GM12878 (cell line): ENCODE measurements at regions of chr20 and their contacts with region 1.

Region 1: DNA sequence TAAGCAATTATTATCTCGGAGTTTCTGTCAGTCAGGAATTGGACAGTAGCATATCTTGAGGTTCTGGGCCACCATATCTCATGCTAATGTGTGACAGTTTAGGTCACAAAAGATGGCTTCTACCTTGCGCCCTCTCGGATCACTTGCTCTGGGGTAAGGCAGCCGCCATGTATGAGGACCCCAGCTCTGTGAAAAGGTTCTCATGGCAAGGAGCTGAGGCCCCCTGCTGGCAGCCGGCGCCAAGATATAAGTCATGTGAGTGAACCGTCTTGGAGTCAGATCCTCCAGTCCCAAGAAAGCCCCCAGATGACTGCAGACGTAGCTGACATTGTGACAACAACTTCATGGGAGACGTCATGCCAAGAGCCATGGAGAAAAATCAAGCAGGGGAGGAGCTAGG is 670.8 kb downstream of the KIF16B start:
- DNase-seq: no peak
- ATAC-seq: peak; percentile 67
- H3K4me3 ChIP-seq: no peak overlapping the region
- H3K27ac ChIP-seq: no peak overlapping the region
- H3K4me1 ChIP-seq: no peaks in the 10 kb centered on the region
- H3K27me3 ChIP-seq: no peaks in the 10 kb centered on the region
- CTCF ChIP-seq: peak; percentile 19 to 54 (median 42); a peak in 5 of 6 replicates
- EP300 ChIP-seq: no peak
- POLR2A ChIP-seq: no peak
- RAD21 ChIP-seq: peak; percentile 44; the same call in 1 of the 2 replicates

Region 2: DNA sequence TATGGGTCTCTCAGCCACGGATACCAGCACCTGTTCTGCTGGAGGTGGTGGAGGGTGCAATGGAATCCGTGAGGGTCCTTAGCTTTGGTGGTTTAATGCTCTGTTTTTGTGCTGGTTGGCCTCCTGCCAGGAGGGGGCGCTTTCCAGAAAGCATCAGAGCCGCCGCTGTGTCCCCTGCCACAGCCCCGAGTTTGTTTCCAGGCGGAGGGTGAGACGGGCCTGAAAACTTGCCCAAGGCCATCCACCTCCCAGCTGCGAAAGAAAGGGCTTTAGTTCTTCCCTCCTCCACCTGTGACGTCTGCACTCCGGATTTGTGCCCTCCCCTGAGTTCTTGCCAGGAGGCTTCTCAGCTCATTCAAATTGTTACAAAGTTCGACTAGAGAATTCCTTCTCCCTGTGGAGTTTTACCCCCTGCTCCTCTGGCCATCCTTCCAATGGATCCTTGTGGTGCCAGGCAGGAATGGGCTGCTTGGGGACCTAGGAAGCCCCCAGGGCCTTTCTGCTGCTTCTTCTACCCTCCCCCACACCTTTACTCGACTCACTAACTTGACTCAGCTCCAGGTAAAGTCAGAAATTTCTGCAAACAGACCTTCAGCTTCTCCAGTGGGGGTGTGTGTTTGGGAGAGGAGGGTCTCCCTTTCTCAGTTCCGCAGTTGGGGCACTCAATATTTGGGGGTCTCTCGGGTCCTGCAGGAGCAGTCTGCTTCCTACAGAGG is 202.9 kb before region 1 on chr20:
- CTCF ChIA-PET with region 1: interaction called, 14 read pairs
- POLR2A ChIA-PET with region 1: no interaction called
- RAD21 ChIA-PET with region 1: no interaction called
- SMC1A ChIA-PET with region 1: interaction called, 3 read pairs
- in situ Hi-C with region 1: no loop called
- intact Hi-C with region 1: no loop called
- DNase-seq: no peak
- ATAC-seq: no peak
- H3K4me3 ChIP-seq: no peak overlapping the region
- H3K27ac ChIP-seq: no peak overlapping the region
- H3K4me1 ChIP-seq: no peaks in the 10 kb centered on the region
- H3K27me3 ChIP-seq: no peaks in the 10 kb centered on the region
- CTCF ChIP-seq: peak in 1 of 3 experiments; percentile 15; a peak in 1 of 6 replicates
- EP300 ChIP-seq: no peak
- POLR2A ChIP-seq: no peak
- RAD21 ChIP-seq: no peak

Region 3: DNA sequence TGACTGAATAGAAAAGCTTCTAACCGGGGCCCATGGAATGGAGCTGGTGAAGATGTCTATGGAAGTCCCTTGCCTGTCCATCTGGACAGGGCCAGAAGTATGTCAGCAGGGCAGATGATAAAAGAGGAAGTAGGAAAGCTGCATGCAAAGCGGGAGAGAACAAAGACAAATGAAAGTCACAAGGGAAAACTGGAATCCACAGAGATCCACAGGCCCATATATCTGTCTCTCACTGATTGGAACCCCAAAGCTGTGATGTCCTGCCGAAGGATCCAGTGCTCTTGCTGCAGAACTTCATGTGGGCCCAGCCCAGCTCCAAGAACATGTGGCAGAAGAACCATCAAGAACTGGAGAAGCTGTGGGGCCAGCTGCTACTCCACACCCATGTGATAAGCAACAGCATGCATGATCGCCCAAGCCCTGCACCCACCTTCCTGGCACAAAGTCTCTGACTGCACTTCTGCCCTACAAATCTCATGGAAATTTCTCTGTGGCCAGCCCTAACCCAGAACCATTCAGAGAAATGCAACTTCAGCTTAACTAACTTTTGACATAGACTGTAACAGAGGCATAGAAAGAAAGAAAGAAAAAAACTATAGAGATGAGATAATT is 45.2 kb before region 1 on chr20:
- CTCF ChIA-PET with region 1: no interaction called
- POLR2A ChIA-PET with region 1: no interaction called
- RAD21 ChIA-PET with region 1: no interaction called
- SMC1A ChIA-PET with region 1: no interaction called
- in situ Hi-C with region 1: no loop called
- intact Hi-C with region 1: no loop called
- DNase-seq: peak; percentile 25
- ATAC-seq: peak; percentile 68
- H3K4me3 ChIP-seq: no peak overlapping the region
- H3K27ac ChIP-seq: no peak overlapping the region
- H3K4me1 ChIP-seq: peaks cover 6% of the 10 kb centered on the region
- H3K27me3 ChIP-seq: no peaks in the 10 kb centered on the region
- CTCF ChIP-seq: no peak
- EP300 ChIP-seq: no peak
- POLR2A ChIP-seq: no peak
- RAD21 ChIP-seq: no peak

Region 4: DNA sequence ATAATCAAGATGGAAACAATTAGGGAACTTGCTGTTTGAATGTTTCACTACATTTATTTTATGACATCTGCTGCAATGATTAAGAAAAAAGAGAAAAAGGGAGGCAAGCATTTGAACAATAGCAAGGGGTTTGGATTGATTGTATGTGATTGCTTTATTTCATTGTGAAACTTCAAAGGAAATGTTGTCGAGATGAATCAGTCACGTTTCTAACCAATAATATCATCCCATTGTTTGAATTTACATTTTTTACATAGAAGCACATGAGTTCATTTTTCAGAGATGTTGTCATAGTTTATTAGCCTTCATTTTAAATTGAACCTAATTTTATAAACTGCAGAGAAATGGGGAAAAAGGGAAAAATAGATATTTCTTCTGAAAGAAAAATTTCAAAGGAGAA is 98.8 kb after region 1 on chr20:
- CTCF ChIA-PET with region 1: no interaction called
- POLR2A ChIA-PET with region 1: no interaction called
- RAD21 ChIA-PET with region 1: no interaction called
- SMC1A ChIA-PET with region 1: no interaction called
- in situ Hi-C with region 1: no loop called
- intact Hi-C with region 1: no loop called
- DNase-seq: no peak
- ATAC-seq: no peak
- H3K4me3 ChIP-seq: no peak overlapping the region
- H3K27ac ChIP-seq: no peak overlapping the region
- H3K4me1 ChIP-seq: no peaks in the 10 kb centered on the region
- H3K27me3 ChIP-seq: no peaks in the 10 kb centered on the region
- CTCF ChIP-seq: no peak
- EP300 ChIP-seq: no peak
- POLR2A ChIP-seq: no peak
- RAD21 ChIP-seq: no peak